RWPE1 (cell line): ENCODE measurements at regions of chr22 and their contacts with region 1.

Region 1: DNA sequence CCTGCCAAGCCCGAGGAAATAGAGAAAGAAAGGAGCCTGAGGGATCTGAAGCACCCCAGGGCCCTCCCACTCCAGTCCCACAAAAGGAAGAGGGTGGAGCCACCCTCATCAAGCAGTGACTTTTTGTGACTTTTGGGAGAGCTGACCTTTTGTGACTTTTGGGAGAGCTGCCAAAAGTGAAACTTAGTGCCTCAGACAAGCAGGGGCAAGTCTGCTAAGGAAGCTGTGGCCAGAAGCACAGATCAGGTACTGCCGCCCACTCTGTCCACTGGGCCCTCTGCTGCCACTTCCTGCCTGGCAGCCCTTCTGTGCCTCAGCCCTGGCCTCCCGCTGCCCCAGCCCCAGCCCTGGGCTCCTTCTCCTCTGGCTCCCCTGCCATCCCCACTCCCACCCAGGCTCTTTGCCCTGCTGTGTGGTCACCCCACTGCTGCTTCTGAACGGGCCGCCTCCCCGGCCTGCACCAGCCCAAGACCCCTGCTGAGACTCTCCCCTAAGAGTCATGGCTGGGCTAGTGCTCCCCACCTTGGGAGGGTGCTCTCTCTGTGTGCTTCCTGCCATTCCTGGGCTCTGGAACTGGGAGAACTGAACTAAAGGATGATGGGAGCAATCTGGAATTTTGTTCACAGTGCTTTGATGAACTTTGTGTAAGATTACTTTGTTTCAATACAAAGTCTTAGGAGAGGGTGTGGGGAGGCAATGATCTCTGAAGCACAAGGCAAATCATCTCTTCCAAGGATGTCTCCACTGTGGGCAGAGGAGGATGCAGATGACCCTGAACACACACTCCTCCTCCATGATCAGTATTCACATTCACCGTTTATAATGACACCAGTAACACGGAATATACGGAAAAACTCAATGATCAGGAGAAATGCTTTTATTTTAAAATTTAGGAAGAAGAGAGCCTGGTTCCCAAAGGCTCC is at the start of gene APOBEC3H:
- DNase-seq: peak; percentile 45
- H3K27ac ChIP-seq: peak within 1 kb of the TSS; percentile 83
- CTCF ChIP-seq: no peak

Region 2: DNA sequence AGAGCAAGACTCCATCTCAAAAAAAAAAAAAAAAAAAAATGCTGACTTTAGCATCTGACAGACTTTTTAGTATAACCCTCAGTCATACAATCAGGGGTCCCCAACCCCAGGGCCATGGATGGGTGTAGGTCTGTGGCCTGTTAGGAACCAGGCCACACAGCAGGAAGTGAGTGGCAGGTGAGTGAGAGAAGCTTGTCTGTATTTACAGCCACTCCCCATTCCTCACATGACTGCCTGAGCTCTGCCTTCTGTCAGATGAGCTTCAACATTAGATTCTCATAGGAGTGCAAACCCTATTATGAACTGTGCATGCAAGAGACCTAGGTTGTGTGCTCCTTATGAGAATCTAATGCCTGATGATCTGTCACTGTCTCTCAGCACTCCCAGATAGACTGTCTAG is 444.5 kb before region 1 on chr22:
- CTCF ChIA-PET with region 1: no interaction called
- POLR2A ChIA-PET with region 1: interaction called, 11 read pairs
- DNase-seq: no peak
- H3K27ac ChIP-seq: no peak overlapping the region
- CTCF ChIP-seq: no peak

Region 3: GRCh38 chr22:39275814-39276436 is 178.6 kb after region 1 on chr22:
- CTCF ChIA-PET with region 1: no interaction called
- POLR2A ChIA-PET with region 1: no interaction called
- DNase-seq: no peak
- H3K27ac ChIP-seq: no peak overlapping the region
- CTCF ChIP-seq: no peak